ENCODE measurements at regions of chr17 and their contacts with region 1.

Region 1: DNA sequence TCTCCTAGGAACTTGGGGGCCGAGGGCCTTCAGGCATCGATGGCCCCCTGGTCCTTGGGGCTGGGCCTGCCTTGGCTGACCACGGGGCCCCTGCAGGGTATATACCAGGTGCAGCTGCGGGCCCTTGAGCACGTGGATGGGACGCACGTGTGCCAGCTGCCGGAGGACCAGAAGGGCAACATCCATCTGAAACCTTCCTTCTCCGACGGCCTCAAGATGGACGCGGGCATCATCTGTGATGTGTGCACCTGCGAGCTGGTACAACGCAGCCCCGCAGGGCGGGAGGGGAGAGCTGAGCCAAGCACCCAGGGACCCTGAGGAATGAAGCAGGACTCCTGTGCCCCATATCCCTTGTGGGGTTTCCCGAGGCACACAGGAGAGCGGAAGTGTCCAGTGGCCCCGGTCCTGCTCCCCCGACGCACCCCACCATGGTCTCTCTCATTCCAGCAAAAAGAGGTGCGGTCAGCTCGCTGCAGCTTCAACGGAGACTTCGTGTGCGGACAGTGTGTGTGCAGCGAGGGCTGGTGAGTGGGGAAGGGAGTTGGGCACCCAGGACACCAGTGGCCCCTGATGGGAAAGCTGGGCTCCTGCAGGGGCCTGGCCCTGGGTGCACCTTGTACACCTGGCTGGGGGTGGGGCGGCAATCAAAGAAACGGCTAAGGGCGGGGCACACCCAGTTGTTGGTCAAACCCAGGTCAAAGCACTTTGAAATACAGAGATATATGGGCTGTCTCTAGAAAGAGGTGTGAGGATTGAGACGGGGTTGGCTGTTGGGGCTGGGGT is 10.6 kb downstream of the ITGB4 start:
- DNase-seq: no peak
- H3K4me3 ChIP-seq: no peak overlapping the region
- H3K27ac ChIP-seq: no peak overlapping the region
- H3K4me1 ChIP-seq: no peaks in the 10 kb centered on the region; a peak in 2 of 7 replicates
- H3K27me3 ChIP-seq: no peaks in the 10 kb centered on the region
- CTCF ChIP-seq: no peak
- EP300 ChIP-seq: no peak
- POLR2A ChIP-seq: no peak
- RAD21 ChIP-seq: no peak

Region 2: DNA sequence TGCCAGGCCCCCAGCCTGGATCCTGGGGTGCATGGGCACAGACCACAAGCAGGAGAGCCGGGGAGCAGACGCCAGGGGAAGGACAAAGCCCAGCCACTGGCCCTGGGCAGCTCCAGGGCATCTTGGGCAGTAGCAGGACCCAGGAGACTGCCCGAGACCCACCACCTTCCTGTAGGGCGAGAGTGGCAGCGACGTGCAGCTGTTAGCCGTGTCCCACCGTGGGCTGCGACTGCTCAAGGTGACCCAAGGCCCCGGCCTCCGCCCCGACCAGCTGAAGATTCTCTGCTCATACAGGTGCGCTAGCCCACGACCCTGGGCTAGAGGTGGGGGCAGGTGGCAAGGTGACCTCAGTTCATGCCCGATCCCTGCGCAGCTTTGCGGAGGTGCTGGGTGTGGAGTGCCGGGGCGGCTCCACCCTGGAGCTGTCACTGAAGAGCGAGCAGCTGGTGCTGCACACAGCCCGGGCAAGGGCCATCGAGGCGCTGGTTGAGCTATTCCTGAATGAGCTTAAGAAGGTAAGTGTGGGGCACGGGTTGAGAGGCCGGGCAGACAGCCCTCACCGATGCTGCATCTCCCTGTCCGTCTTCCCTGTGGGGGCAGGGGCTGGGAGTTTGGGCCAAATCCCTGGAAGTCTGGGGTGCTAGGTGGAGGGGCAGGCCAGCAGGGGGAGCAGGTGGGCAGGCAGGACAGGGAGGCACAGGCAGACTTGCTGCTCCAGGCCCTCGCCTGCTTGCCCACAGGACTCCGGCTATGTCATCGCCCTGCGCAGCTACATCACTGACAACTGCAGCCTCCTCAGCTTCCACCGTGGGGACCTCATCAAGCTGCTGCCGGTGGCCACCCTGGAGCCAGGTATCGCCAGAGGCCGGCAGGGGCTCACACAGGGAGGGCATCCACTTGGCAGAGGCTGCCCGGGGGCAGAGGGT is 112.1 kb before region 1 on chr17:
- CTCF ChIA-PET with region 1: interaction called, 10 read pairs
- POLR2A ChIA-PET with region 1: no interaction called
- DNase-seq: peak; percentile 70 to 96
- H3K4me3 ChIP-seq: no peak overlapping the region
- H3K27ac ChIP-seq: no peak overlapping the region
- H3K4me1 ChIP-seq: peaks cover 0 to 4% (median 1%) of the 10 kb centered on the region in 4 experiments; a peak in 4 of 7 replicates
- H3K27me3 ChIP-seq: no peaks in the 10 kb centered on the region; a peak in 2 of 7 replicates
- CTCF ChIP-seq: peak; percentile 82 to 96 (median 94)
- EP300 ChIP-seq: no peak
- POLR2A ChIP-seq: no peak; a peak in 1 of 3 replicates
- RAD21 ChIP-seq: peak; percentile 53 to 61

Region 3: GRCh38 chr17:75896415-75897159 is 164.7 kb after region 1 on chr17 and contains the start of gene TRIM65:
- CTCF ChIA-PET with region 1: no interaction called
- POLR2A ChIA-PET with region 1: no interaction called
- DNase-seq: peak in 1 of 2 experiments; percentile 92
- H3K4me3 ChIP-seq: peak within 1 kb of the TSS; percentile 58 to 96 (median 80)
- H3K27ac ChIP-seq: peak within 1 kb of the TSS; percentile 59; the same call in 1 of the 2 replicates
- H3K4me1 ChIP-seq: peaks cover 4 to 25% (median 13%) of the 10 kb centered on the region in 4 experiments
- H3K27me3 ChIP-seq: no peaks in the 10 kb centered on the region
- CTCF ChIP-seq: no peak
- EP300 ChIP-seq: no peak
- POLR2A ChIP-seq: peak; percentile 88 to 94
- RAD21 ChIP-seq: no peak
- total RNA-seq, gene TRIM65: 47.7 and 48.6 TPM in 2 replicates

Measured in H1 (cell line).